AG04449 (cell line): ENCODE measurements at regions of chr4 and their contacts with region 1.

Region 1: GRCh38 chr4:87375719-87376291 is 15.2 kb downstream of the HSD17B11 start:
- DNase-seq: peak; percentile 70
- H3K4me3 ChIP-seq: no peak overlapping the region
- CTCF ChIP-seq: peak; percentile 62

Region 2: DNA sequence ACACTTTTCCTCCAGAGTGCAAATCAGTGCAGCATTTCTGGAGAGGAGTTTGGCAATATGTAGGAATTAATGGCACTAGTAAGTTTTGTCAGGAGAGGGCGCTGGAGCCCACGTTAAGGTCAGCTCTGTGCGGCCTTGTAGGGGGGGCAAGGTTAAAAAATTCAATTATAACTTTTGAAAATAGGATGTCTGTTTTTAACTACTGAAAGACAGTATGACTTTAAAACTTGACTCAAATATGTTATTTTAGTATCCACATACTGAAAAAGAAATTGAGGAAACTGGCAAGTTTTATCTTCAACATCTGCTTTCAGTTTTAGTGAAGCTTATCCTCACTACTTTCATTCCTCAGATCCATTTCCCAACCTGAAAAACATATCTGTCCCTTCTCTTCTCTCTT is 22.2 kb before region 1 on chr4:
- CTCF ChIA-PET with region 1: interaction called, 12 read pairs
- POLR2A ChIA-PET with region 1: no interaction called
- DNase-seq: no peak
- H3K4me3 ChIP-seq: no peak overlapping the region
- CTCF ChIP-seq: peak; percentile 46

Region 3: GRCh38 chr4:87363567-87363966 is 12.2 kb before region 1 on chr4:
- CTCF ChIA-PET with region 1: interaction called, 18 read pairs
- POLR2A ChIA-PET with region 1: no interaction called
- DNase-seq: no peak
- H3K4me3 ChIP-seq: no peak overlapping the region
- CTCF ChIP-seq: no peak

Region 4: DNA sequence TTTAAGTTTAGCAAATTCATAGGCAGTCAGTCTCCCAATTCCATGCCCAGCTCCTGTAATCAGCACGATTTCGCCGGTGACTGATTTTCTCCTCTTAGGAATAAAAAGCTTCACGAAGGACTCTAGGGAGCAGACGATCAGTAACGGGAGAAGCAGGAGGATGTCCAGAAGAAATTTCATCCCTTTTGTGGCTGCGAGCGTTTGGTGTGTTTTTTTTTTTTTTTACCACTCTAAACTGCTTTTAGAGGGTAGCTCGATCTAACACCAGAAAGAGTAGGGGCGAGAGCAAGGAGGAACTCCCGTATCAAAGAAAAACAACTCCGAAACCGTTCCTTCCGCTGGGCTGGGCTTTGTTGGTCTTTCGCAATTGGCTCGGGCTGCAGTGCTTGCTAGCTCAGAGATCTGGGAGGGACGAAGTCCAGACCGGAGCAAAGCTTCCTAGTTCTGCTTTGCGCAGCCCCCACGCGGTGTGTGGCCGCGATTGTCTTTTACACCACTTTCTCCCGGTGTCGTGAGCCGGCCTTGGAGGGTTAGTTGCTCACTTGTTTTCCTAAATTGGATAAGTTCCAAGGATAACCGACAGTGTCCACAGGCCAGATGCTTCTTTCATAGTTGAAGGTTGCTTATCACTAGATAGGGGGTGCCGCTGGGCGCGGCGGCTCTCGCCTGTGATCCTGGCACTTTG is 15.2 kb after region 1 on chr4 and contains the start of gene HSD17B11:
- CTCF ChIA-PET with region 1: interaction called, 25 read pairs
- POLR2A ChIA-PET with region 1: interaction called, 4 read pairs
- DNase-seq: peak; percentile 54
- H3K4me3 ChIP-seq: peak within 1 kb of the TSS; percentile 59
- CTCF ChIP-seq: no peak